CD4-positive, alpha-beta T cell (primary cell): ENCODE measurements at regions of chr4 and their contacts with region 1.

Region 1: GRCh38 chr4:781493-782216 is 44.3 kb downstream of the CPLX1 start:
- DNase-seq: peak; percentile 96 to 99 (median 98)
- ATAC-seq: peak; percentile 91
- H3K4me3 ChIP-seq: peak overlapping the region; percentile 97
- H3K4me3 Mint-ChIP-seq: peak overlapping the region; percentile 97
- H3K27ac ChIP-seq: peak overlapping the region; percentile 80 to 90
- H3K27ac Mint-ChIP-seq: peak overlapping the region; percentile 95
- H3K4me1 ChIP-seq: peaks cover 65% of the 10 kb centered on the region
- H3K4me1 Mint-ChIP-seq: peaks cover 58% of the 10 kb centered on the region
- H3K27me3 ChIP-seq: peaks cover 16 to 32% of the 10 kb centered on the region in 2 experiments
- H3K27me3 Mint-ChIP-seq: peaks cover 23% of the 10 kb centered on the region
- CTCF ChIP-seq: no peak

Region 2: GRCh38 chr4:288891-289290 is 492.8 kb before region 1 on chr4:
- CTCF ChIA-PET with region 1: no interaction called
- POLR2A ChIA-PET with region 1: no interaction called
- intact Hi-C with region 1: no loop called
- DNase-seq: no peak
- ATAC-seq: no peak
- H3K4me3 ChIP-seq: no peak overlapping the region
- H3K4me3 Mint-ChIP-seq: no peak overlapping the region
- H3K27ac ChIP-seq: no peak overlapping the region
- H3K27ac Mint-ChIP-seq: no peak overlapping the region
- H3K4me1 ChIP-seq: no peaks in the 10 kb centered on the region
- H3K4me1 Mint-ChIP-seq: no peaks in the 10 kb centered on the region
- H3K27me3 ChIP-seq: no peaks in the 10 kb centered on the region
- H3K27me3 Mint-ChIP-seq: peaks cover 6% of the 10 kb centered on the region
- CTCF ChIP-seq: no peak

Region 3: GRCh38 chr4:337143-337931 is 444.3 kb before region 1 on chr4 and contains the start of gene ZNF141:
- CTCF ChIA-PET with region 1: no interaction called
- POLR2A ChIA-PET with region 1: no interaction called
- intact Hi-C with region 1: loop called in 1 of 2 experiments (anchors 5 kb)
- DNase-seq: peak; percentile 81 to 97 (median 87)
- ATAC-seq: peak; percentile 87
- H3K4me3 ChIP-seq: peak within 1 kb of the TSS; percentile 98
- H3K4me3 Mint-ChIP-seq: peak within 1 kb of the TSS; percentile 94
- H3K27ac ChIP-seq: peak within 1 kb of the TSS; percentile 85 to 91
- H3K27ac Mint-ChIP-seq: peak within 1 kb of the TSS; percentile 98
- H3K4me1 ChIP-seq: peaks cover 27% of the 10 kb centered on the region
- H3K4me1 Mint-ChIP-seq: peaks cover 51% of the 10 kb centered on the region
- H3K27me3 ChIP-seq: no peaks in the 10 kb centered on the region
- H3K27me3 Mint-ChIP-seq: no peaks in the 10 kb centered on the region
- CTCF ChIP-seq: no peak
- total RNA-seq, gene ZNF141: 13.6 to 13.7 TPM

Region 4: GRCh38 chr4:663438-664428 is 117.9 kb before region 1 on chr4:
- CTCF ChIA-PET with region 1: no interaction called
- POLR2A ChIA-PET with region 1: interaction called, 3 read pairs
- intact Hi-C with region 1: loop called in 1 of 2 experiments (anchors 5 kb)
- DNase-seq: peak; percentile 60 to 84 (median 76)
- ATAC-seq: peak; percentile 87
- H3K4me3 ChIP-seq: peak overlapping the region; percentile 86
- H3K4me3 Mint-ChIP-seq: peak overlapping the region; percentile 88
- H3K27ac ChIP-seq: peak overlapping the region; percentile 59 to 62
- H3K27ac Mint-ChIP-seq: peak overlapping the region; percentile 80
- H3K4me1 ChIP-seq: peaks cover 22% of the 10 kb centered on the region
- H3K4me1 Mint-ChIP-seq: peaks cover 10% of the 10 kb centered on the region
- H3K27me3 ChIP-seq: no peaks in the 10 kb centered on the region
- H3K27me3 Mint-ChIP-seq: no peaks in the 10 kb centered on the region
- CTCF ChIP-seq: no peak

Region 5: DNA sequence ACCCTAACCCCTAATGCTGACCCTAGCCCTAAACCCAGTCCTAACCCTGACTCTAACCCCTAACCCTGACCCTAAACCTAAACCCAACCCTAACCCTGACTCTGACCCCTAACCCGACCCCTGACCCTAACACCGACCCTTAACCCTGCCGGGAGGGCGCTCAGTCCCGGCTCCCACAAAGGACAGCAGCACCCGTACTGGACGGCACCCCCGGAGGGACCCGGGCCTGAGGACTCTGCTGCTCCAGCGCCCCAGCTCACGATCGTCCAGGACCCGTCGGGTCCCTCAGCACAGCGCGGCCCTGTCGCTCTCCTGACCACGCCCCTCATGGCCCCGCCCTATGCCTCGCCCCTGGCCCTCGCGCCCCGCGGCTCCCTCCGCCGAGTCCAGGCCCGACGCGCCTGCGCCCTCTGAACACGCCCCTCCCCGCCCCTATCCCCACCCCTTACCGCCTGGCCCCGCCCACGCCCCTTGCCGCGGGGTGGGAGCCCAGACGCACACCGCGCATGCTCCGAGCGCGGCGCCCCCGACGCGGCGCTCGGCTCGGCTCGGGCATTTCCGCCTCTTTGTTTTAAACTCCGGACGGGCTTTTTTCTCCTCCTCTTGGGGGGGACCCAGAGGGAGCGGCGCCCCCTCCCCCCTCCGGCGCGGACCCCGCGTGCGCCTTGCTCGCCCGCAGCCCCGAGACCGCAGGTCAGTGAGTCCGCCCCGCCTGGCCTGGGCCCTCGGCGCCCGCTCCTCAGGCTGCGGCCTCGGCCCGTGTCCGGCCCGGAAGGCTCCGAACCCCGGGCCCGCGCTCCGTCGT is 76.2 kb before region 1 on chr4 and contains the start of gene PCGF3:
- CTCF ChIA-PET with region 1: no interaction called
- POLR2A ChIA-PET with region 1: no interaction called
- intact Hi-C with region 1: loop called in 1 of 2 experiments (anchors 2 kb)
- DNase-seq: peak; percentile 93 to 99 (median 96)
- ATAC-seq: peak; percentile 95
- H3K4me3 ChIP-seq: peak within 1 kb of the TSS; percentile 77
- H3K4me3 Mint-ChIP-seq: peak within 1 kb of the TSS; percentile 90
- H3K27ac ChIP-seq: peak within 1 kb of the TSS; percentile 58 to 68
- H3K27ac Mint-ChIP-seq: peak within 1 kb of the TSS; percentile 69
- H3K4me1 ChIP-seq: peaks cover 36% of the 10 kb centered on the region
- H3K4me1 Mint-ChIP-seq: peaks cover 25% of the 10 kb centered on the region
- H3K27me3 ChIP-seq: no peaks in the 10 kb centered on the region
- H3K27me3 Mint-ChIP-seq: no peaks in the 10 kb centered on the region
- CTCF ChIP-seq: no peak
- total RNA-seq, gene PCGF3: 45.1 to 48.6 TPM

Region 6: GRCh38 chr4:973431-974397 is 192.1 kb after region 1 on chr4 and contains the start of gene DGKQ:
- CTCF ChIA-PET with region 1: no interaction called
- POLR2A ChIA-PET with region 1: no interaction called
- intact Hi-C with region 1: loop called (anchors 1 to 5 kb)
- DNase-seq: peak; percentile 78 to 96 (median 90)
- ATAC-seq: peak; percentile 94
- H3K4me3 ChIP-seq: peak within 1 kb of the TSS; percentile 63
- H3K4me3 Mint-ChIP-seq: peak within 1 kb of the TSS; percentile 60
- H3K27ac ChIP-seq: no peak within 1 kb of the TSS
- H3K27ac Mint-ChIP-seq: no peak within 1 kb of the TSS
- H3K4me1 ChIP-seq: peaks cover 32% of the 10 kb centered on the region
- H3K4me1 Mint-ChIP-seq: no peaks in the 10 kb centered on the region
- H3K27me3 ChIP-seq: no peaks in the 10 kb centered on the region
- H3K27me3 Mint-ChIP-seq: no peaks in the 10 kb centered on the region
- CTCF ChIP-seq: no peak
- total RNA-seq, gene DGKQ: 17.6 to 19.2 TPM

Region 7: GRCh38 chr4:986879-987623 is 205.4 kb after region 1 on chr4 and contains the start of gene IDUA:
- CTCF ChIA-PET with region 1: no interaction called
- POLR2A ChIA-PET with region 1: interaction called, 9 read pairs
- intact Hi-C with region 1: loop called (anchors 2 kb)
- DNase-seq: peak; percentile 73 to 93 (median 86)
- ATAC-seq: peak; percentile 84
- H3K4me3 ChIP-seq: peak within 1 kb of the TSS; percentile 78
- H3K4me3 Mint-ChIP-seq: peak within 1 kb of the TSS; percentile 94
- H3K27ac ChIP-seq: peak within 1 kb of the TSS; percentile 41 to 46
- H3K27ac Mint-ChIP-seq: peak within 1 kb of the TSS; percentile 82
- H3K4me1 ChIP-seq: peaks cover 36% of the 10 kb centered on the region
- H3K4me1 Mint-ChIP-seq: peaks cover 25% of the 10 kb centered on the region
- H3K27me3 ChIP-seq: no peaks in the 10 kb centered on the region
- H3K27me3 Mint-ChIP-seq: no peaks in the 10 kb centered on the region
- CTCF ChIP-seq: peak; percentile 57
- total RNA-seq, gene IDUA: 70.2 to 77.8 TPM

Region 8: DNA sequence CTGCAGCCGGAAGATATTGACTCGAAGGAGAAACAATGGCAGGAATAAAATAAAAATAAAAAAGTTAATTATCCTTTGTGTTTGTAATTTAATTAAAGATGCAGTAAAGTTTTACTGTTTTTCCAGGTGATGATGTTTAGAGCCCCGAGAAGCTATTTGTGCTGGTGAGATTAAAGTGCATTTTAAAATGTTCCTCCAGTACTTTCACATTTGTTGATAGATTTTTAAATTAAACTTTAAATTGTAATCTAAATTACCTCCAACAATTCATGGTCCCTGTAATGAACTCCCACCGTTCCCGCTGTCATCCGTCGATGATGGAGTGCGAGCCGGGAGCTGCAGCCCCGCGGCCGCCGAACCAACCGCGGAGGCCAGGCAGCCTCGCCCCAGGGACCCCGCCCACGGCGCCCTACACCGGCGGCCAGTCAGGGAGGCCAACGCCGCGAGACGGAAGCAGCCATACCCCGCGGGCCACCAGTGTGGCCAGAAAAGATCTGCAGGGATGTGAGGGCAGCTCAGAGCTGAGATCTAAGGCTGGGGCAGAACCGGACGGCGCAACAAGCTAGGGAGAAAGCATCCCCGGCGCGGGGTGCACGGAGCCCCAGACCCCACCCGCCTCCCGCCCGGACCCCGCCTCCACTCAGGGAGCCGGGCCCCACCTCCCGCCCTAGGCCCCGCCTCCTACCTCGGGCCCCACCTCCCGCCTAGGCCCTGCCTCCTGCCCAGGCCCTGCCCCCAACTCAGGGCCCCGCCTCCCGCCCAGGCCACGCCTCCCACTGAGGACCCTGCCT is 798.4 kb after region 1 on chr4:
- CTCF ChIA-PET with region 1: no interaction called
- POLR2A ChIA-PET with region 1: interaction called, 3 read pairs
- intact Hi-C with region 1: loop called in 1 of 2 experiments (anchors 10 kb)
- DNase-seq: peak; percentile 88 to 97 (median 93)
- ATAC-seq: peak; percentile 82
- H3K4me3 ChIP-seq: peak overlapping the region; percentile 73
- H3K4me3 Mint-ChIP-seq: peak overlapping the region; percentile 86
- H3K27ac ChIP-seq: peak overlapping the region in 1 of 2 donors; percentile 65
- H3K27ac Mint-ChIP-seq: peak overlapping the region; percentile 63
- H3K4me1 ChIP-seq: peaks cover 14% of the 10 kb centered on the region
- H3K4me1 Mint-ChIP-seq: no peaks in the 10 kb centered on the region
- H3K27me3 ChIP-seq: no peaks in the 10 kb centered on the region
- H3K27me3 Mint-ChIP-seq: no peaks in the 10 kb centered on the region
- CTCF ChIP-seq: no peak

Region 9: GRCh38 chr4:2220016-2220630 is 1438.5 kb after region 1 on chr4:
- CTCF ChIA-PET with region 1: no interaction called
- POLR2A ChIA-PET with region 1: no interaction called
- intact Hi-C with region 1: no loop called
- DNase-seq: peak; percentile 71 to 88 (median 78)
- ATAC-seq: peak; percentile 98
- H3K4me3 ChIP-seq: no peak overlapping the region
- H3K4me3 Mint-ChIP-seq: no peak overlapping the region
- H3K27ac ChIP-seq: no peak overlapping the region
- H3K27ac Mint-ChIP-seq: no peak overlapping the region
- H3K4me1 ChIP-seq: peaks cover 6% of the 10 kb centered on the region
- H3K4me1 Mint-ChIP-seq: peaks cover 7% of the 10 kb centered on the region
- H3K27me3 ChIP-seq: no peaks in the 10 kb centered on the region
- H3K27me3 Mint-ChIP-seq: no peaks in the 10 kb centered on the region
- CTCF ChIP-seq: peak; percentile 88